ENCODE measurements at regions of chr18 and their contacts with region 1.

Region 1: GRCh38 chr18:66916834-66917233 is 312.9 kb upstream of the CDH19 start:
- DNase-seq: no peak
- ATAC-seq: no peak
- H3K4me3 ChIP-seq: no peak overlapping the region
- H3K27ac ChIP-seq: no peak overlapping the region
- H3K4me1 ChIP-seq: no peaks in the 10 kb centered on the region
- H3K27me3 ChIP-seq: no peaks in the 10 kb centered on the region

Region 2: DNA sequence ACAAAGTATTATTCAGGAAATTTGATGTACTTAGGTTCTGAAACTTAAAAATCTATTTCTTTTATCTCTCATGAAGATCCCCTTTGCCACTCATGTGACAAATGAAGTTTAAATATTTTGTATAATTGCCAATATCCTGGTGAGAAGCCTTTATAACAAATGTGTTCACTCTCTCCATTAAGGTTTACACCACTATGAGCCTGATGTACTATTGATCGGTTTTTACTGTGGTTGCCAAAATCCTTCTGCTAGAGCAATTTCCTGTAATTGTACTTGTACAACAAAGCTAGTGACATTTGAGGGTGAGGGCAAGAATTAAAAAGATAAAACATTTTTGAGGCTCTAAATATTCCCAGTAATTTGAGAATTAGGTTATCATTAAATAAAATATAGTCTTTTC is 90.6 kb before region 1 on chr18:
- intact Hi-C with region 1: no loop called
- DNase-seq: no peak
- ATAC-seq: no peak
- H3K4me3 ChIP-seq: no peak overlapping the region
- H3K27ac ChIP-seq: no peak overlapping the region
- H3K4me1 ChIP-seq: no peaks in the 10 kb centered on the region
- H3K27me3 ChIP-seq: no peaks in the 10 kb centered on the region

Region 3: DNA sequence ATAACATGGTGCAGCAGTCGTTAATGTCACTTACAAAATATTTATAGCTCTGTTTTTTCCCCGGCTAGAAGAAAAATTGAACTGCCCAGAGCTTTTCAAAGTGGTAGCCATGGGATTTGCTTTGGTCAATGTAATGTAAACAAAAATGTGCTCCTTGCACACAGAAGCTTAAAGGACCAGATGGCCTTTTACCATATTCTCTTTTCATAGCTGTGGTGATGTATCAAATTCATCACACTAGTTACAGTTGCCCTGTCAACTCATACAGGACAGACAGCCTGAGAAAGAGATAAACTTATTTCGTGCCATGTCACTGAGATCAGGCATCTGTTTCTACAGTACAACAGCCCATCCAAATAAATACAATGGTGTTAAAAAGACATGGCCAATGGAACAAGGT is 55.1 kb after region 1 on chr18:
- intact Hi-C with region 1: loop called in 1 of 4 experiments (anchors 10 kb)
- DNase-seq: no peak
- ATAC-seq: no peak
- H3K4me3 ChIP-seq: no peak overlapping the region
- H3K27ac ChIP-seq: no peak overlapping the region
- H3K4me1 ChIP-seq: no peaks in the 10 kb centered on the region
- H3K27me3 ChIP-seq: no peaks in the 10 kb centered on the region